Psoas muscle (tissue), 8 donors: ENCODE measurements at regions of chr10 and their contacts with region 1.

Region 1: DNA sequence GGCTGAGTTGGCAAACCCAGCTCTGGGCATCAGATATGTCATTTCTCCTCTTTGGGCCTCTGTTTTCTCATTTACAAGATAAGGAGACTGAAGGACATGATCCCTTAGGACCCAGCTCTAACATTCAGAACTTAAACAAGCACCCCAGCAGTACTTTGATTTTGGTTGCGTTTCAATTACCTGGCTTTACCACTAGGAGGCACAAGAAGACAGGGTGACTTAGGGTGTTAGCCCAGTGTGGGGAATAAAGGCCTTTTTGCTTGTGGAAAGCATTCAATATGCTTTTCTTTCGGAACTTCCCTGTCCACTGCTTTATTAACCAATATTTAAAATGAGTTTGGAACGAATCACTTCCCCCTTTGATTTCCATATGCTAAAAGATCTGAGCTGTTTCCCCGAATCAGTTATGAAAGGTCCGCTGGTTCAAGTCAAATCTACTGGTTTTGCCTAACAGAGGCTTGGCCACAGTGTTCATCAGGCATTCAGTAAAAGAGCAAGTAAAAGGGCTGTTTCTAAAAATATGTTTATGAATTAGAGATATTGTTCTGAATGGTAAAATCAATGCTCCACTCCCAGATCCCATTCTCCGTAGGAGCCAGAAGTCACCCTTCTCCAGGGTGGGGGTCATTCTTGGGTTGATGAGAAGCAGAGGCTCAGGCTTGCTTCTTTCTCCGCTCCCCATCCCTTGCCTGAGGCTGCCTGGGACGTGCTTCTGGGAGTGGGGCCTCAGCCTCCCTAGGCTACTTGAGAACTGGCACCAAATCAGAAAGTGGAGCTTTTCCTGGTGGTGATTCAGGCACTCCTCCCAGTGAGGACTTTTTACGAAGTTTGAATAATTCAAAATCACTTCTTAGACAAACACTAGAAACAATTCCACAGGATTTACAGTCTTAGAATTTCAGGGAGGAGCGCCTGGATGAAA is 105.5 kb downstream of the MYOF start:
- DNase-seq: peak in 1 of 2 donors; percentile 18
- ATAC-seq: peak; percentile 74 to 91 (median 86)
- H3K4me3 ChIP-seq: no peak overlapping the region
- H3K27ac ChIP-seq: peak overlapping the region; percentile 41
- H3K4me1 ChIP-seq: no peaks in the 10 kb centered on the region
- H3K27me3 ChIP-seq: no peaks in the 10 kb centered on the region
- CTCF ChIP-seq: peak; percentile 95

Region 2: DNA sequence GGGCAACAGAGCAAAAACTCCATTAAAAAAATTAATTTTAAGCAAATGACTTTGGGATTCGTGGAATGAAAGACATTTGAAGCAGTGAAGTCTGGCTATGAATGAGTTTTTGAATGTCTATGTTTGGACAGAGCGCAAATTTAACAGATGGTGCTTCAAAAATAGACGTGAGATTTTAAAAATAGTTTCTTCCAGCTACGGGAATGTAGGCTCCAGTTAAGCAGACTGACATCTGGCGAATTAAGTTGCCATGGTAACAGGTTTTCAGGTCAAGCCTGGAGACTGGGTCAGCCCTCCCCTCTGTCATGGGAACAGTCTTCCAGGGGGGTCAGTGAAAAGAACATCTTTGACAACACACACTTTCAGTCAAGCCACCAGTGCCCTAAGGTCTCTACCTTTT is 43.5 kb after region 1 on chr10:
- intact Hi-C with region 1: loop called in 1 of 2 experiments (anchors 5 kb)
- DNase-seq: no peak
- ATAC-seq: peak in 3 of 4 donors; percentile 56 to 69 (median 58)
- H3K4me3 ChIP-seq: no peak overlapping the region
- H3K27ac ChIP-seq: no peak overlapping the region
- H3K4me1 ChIP-seq: peaks cover 9% of the 10 kb centered on the region
- H3K27me3 ChIP-seq: no peaks in the 10 kb centered on the region
- CTCF ChIP-seq: no peak

Region 3: GRCh38 chr10:93482145-93482834 is 105.7 kb after region 1 on chr10 and contains the start of gene MYOF:
- intact Hi-C with region 1: loop called (anchors 1 to 2 kb)
- DNase-seq: peak; percentile 46 to 62
- ATAC-seq: peak; percentile 87 to 96 (median 90)
- H3K4me3 ChIP-seq: peak within 1 kb of the TSS; percentile 67
- H3K27ac ChIP-seq: peak within 1 kb of the TSS; percentile 50
- H3K4me1 ChIP-seq: no peaks in the 10 kb centered on the region
- H3K27me3 ChIP-seq: peaks cover 0 to 5% (median 0%) of the 10 kb centered on the region in 3 donors
- CTCF ChIP-seq: peak; percentile 58
- total RNA-seq, gene MYOF: 4.2 to 9.4 (median 5.8) TPM

Region 4: DNA sequence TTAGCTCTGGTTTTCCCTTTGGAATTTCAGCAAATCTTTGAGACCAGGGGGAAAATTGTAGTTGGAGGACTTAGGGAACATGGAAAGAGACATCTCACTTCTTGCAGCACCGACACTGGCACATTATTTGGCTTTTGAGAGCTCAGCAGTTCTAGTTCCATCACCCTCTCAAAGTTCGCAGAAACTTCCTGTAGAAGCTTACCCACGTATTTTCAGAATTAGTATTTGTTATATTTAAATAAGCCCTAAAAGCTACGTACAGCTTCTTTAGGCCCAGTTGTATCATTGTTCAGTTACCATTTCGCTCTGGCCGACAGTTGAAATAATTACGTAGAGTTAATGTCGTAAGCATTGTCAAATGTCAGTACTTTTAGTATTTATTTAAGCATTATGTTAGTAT is 133.2 kb after region 1 on chr10:
- intact Hi-C with region 1: loop called in 1 of 2 experiments (anchors 1 kb)
- DNase-seq: no peak
- ATAC-seq: no peak
- H3K4me3 ChIP-seq: no peak overlapping the region
- H3K27ac ChIP-seq: no peak overlapping the region
- H3K4me1 ChIP-seq: no peaks in the 10 kb centered on the region
- H3K27me3 ChIP-seq: no peaks in the 10 kb centered on the region
- CTCF ChIP-seq: no peak

Region 5: GRCh38 chr10:93680412-93681047 is 303.9 kb after region 1 on chr10:
- intact Hi-C with region 1: loop called in 1 of 2 experiments (anchors 10 kb)
- DNase-seq: no peak
- ATAC-seq: no peak
- H3K4me3 ChIP-seq: no peak overlapping the region
- H3K27ac ChIP-seq: no peak overlapping the region
- H3K4me1 ChIP-seq: no peaks in the 10 kb centered on the region
- H3K27me3 ChIP-seq: no peaks in the 10 kb centered on the region
- CTCF ChIP-seq: peak; percentile 26